Ascending aorta (tissue), 2 donors: ENCODE measurements at regions of chr18 and their contacts with region 1.

Region 1: GRCh38 chr18:49858309-49859020 is 45.1 kb upstream of the ACAA2 start:
- DNase-seq: peak in 1 of 2 donors; percentile 71
- H3K4me3 ChIP-seq: no peak overlapping the region
- H3K27ac ChIP-seq: no peak overlapping the region
- H3K4me1 ChIP-seq: no peaks in the 10 kb centered on the region
- H3K27me3 ChIP-seq: no peaks in the 10 kb centered on the region
- CTCF ChIP-seq: peak; percentile 74 to 89 (median 78)

Region 2: DNA sequence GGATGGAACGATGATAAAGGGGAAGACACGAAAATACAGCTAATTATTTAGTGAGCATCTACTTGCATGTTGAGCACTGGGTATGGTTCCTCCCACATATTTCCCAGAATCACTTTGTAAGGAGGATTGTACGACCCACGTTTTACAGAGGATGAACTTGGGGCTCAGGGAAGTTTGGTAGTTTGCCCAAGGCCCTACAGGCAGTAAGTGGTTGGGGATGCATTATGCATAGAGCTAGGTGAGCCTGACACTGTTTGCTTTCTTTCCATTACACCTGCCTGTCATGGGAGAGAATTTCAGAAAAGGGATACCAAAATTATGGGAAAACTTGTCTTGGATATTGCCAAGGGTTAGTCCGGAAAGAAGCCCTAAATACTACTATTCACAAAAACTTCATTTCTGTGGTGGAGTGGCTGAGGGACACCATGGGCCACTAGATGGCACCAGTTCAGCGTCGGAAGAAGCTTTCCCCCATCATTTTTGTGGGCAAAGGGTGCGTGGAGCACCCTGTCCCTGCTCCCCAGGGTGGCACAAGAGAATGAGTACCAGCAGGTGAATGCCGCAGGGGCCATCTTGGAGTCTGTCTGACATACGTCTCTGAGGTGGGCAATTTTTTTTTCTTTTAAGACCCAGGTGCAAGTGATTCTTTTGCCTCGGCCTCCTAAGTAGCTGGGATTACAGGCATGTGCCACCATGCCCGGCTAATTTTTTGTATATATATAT is 347.9 kb before region 1 on chr18:
- intact Hi-C with region 1: loop called (anchors 1 kb)
- DNase-seq: no peak
- H3K4me3 ChIP-seq: no peak overlapping the region
- H3K27ac ChIP-seq: no peak overlapping the region
- H3K4me1 ChIP-seq: no peaks in the 10 kb centered on the region
- H3K27me3 ChIP-seq: no peaks in the 10 kb centered on the region
- CTCF ChIP-seq: peak; percentile 36 to 78 (median 60)

Region 3: GRCh38 chr18:49561289-49562193 is 296.9 kb before region 1 on chr18 and contains the start of gene LIPG:
- intact Hi-C with region 1: loop called (anchors 5 kb)
- DNase-seq: no peak
- H3K4me3 ChIP-seq: peak within 1 kb of the TSS; percentile 46 to 51
- H3K27ac ChIP-seq: no peak within 1 kb of the TSS
- H3K4me1 ChIP-seq: peaks cover 0 to 19% of the 10 kb centered on the region in 2 donors
- H3K27me3 ChIP-seq: peaks cover 3% of the 10 kb centered on the region
- CTCF ChIP-seq: no peak
- total RNA-seq, gene LIPG: 1.6 TPM